GM23248 (cell line): ENCODE measurements at regions of chr9 and their contacts with region 1.

Region 1: DNA sequence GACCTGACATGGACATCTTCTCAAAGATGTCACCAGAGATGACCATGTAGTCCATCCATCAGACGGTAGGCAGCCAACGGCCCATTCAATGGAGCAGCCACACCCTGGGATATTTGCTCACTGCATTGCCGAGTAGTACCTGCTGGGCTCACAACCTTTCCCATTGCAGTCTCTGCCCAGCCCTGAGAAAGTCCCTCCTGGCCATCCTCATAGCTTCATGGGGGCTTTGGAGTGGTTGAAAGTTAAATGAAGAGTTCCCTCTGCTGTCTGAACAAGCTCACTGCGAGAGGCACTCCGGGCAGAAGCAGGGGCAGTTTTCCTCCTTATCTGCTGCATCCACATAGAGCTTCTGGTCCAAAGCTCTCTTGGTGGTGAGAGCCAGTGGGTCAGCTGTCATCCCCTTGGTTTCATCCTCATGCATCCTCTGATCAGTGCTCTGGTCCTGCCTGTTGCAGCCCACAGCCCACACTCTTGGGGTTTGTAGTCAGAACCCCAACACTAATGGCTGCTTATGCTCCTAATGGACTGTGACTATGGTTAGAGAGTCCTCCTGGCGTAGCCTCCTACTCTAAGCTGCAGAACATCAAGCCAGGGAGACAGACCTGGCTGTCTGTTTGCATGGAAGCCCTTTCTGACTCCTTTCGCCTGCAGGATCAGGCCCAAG is 23.4 kb downstream of the TNFSF8 start:
- DNase-seq: peak; percentile 72
- H3K4me3 ChIP-seq: no peak overlapping the region
- H3K27ac ChIP-seq: no peak overlapping the region
- H3K4me1 ChIP-seq: peaks cover 36% of the 10 kb centered on the region
- H3K27me3 ChIP-seq: no peaks in the 10 kb centered on the region

Region 2: DNA sequence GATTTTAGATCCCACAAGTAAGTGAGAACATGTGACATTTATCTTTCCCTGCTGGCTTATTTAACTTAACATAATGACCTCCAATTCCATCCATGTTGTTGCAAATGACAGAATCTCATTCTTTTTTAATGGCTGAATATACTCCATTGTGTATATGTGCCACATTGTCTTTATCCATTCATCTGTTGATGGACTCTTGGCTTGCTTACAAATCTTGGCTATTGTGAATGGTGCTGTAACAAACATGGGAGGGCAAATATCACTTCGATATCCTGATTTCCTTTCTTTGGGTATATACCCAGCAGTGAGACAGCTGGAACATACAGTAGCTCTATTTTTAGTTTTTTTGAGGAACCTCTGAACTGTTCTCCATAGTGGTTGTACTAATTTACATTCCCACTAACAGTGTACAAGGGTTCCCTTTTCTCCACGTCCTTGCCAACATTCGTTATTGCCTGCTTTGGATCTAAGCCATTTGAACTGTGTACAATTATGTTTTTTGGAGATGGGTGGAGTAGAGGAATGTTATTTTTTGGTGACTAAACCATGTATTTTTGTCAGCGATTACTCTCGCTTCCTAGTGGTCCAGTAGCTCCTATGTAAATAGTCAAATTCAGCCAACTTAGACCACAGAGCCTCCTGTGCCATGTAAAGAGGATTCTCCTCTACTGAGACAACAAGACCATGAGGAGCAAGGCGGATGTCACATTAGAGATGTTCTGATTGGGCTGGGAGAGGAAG is 161.8 kb before region 1 on chr9:
- in situ Hi-C with region 1: loop called (anchors 5 kb)
- DNase-seq: peak; percentile 64
- H3K4me3 ChIP-seq: no peak overlapping the region
- H3K27ac ChIP-seq: no peak overlapping the region
- H3K4me1 ChIP-seq: peaks cover 22% of the 10 kb centered on the region
- H3K27me3 ChIP-seq: no peaks in the 10 kb centered on the region